Mucosa of descending colon (tissue), 3 donors: ENCODE measurements at regions of chr17 and their contacts with region 1.

Region 1: GRCh38 chr17:56715613-56716357 is 117.9 kb downstream of the C17orf67 start:
- DNase-seq: peak; percentile 57 to 85 (median 64)
- ATAC-seq: peak; percentile 86
- H3K4me3 ChIP-seq: no peak overlapping the region
- H3K4me1 ChIP-seq: no peaks in the 10 kb centered on the region
- CTCF ChIP-seq: peak; percentile 60

Region 2: GRCh38 chr17:56592487-56593085 is 123.2 kb before region 1 on chr17:
- intact Hi-C with region 1: loop called (anchors 1 to 5 kb)
- DNase-seq: peak in 2 of 3 donors; percentile 58 to 68
- ATAC-seq: peak; percentile 77
- H3K4me3 ChIP-seq: no peak overlapping the region
- H3K4me1 ChIP-seq: peaks cover 29% of the 10 kb centered on the region
- CTCF ChIP-seq: peak; percentile 91